Ovary (tissue), 10 donors: ENCODE measurements at regions of chr18 and their contacts with region 1.

Region 1: GRCh38 chr18:55322178-55322735 is 265.7 kb downstream of the TCF4 start:
- DNase-seq: peak; percentile 80 to 90 (median 86)
- H3K4me3 ChIP-seq: peak overlapping the region; percentile 54
- H3K27ac ChIP-seq: peak overlapping the region; percentile 96 to 97
- H3K4me1 ChIP-seq: peaks cover 3% of the 10 kb centered on the region
- H3K27me3 ChIP-seq: no peaks in the 10 kb centered on the region
- CTCF ChIP-seq: peak in 1 of 3 donors; percentile 14
- EP300 ChIP-seq: no peak
- POLR2A ChIP-seq: peak; percentile 45

Region 2: DNA sequence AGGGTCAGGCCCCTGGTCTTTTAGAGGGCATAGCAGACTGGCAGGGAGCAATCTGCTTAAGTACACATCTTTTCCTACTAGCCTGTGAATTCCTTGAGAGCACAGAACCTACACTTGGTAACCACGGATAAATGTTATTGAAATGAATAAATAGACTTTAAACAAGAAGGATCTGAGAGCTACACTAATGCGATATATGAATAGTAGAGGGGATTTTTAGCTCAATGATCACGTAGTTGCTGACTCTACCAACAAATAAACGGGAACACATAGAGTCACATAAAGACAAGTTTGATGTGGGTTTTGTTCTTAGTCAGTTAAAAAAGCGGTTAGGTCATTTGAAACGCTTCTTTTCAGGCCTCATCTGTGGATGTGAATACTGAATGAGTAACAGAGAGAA is 72.7 kb before region 1 on chr18:
- intact Hi-C with region 1: loop called in 3 of 4 experiments (anchors 5 kb)
- DNase-seq: no peak
- H3K4me3 ChIP-seq: no peak overlapping the region
- H3K27ac ChIP-seq: no peak overlapping the region
- H3K4me1 ChIP-seq: peaks cover 7% of the 10 kb centered on the region
- H3K27me3 ChIP-seq: no peaks in the 10 kb centered on the region
- CTCF ChIP-seq: no peak
- EP300 ChIP-seq: no peak
- POLR2A ChIP-seq: no peak

Region 3: DNA sequence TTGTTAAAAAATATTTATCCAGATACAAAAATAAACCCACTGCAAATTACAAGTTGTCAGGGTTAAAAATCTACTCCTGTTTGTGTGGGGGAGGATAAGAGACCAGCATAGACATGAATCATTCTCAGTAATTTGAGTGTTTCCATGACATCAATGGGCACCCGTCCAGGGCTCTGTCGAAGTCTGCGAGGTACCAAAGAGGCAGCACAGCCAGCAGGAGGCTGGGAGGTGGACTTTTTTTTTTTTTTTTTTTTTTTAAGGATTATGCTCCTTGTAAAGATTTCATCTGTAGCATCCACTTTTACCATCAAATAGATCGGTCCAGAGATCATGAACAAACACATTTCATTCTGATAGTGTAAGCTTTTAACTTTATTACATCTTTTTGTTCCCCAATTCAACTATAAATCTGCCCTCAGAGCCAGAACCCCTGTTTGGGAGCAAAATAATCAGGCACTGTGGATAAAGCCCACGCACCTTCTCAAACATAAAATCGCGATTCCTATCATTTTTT is 83.7 kb after region 1 on chr18:
- intact Hi-C with region 1: loop called in 1 of 4 experiments (anchors 10 kb)
- DNase-seq: peak; percentile 83 to 96 (median 92)
- H3K4me3 ChIP-seq: no peak overlapping the region
- H3K27ac ChIP-seq: peak overlapping the region in 1 of 2 donors; percentile 76
- H3K4me1 ChIP-seq: peaks cover 4% of the 10 kb centered on the region
- H3K27me3 ChIP-seq: no peaks in the 10 kb centered on the region
- CTCF ChIP-seq: no peak
- EP300 ChIP-seq: no peak
- POLR2A ChIP-seq: no peak